K562 (cell line): ENCODE measurements at regions of chr16 and their contacts with region 1.

Region 1: DNA sequence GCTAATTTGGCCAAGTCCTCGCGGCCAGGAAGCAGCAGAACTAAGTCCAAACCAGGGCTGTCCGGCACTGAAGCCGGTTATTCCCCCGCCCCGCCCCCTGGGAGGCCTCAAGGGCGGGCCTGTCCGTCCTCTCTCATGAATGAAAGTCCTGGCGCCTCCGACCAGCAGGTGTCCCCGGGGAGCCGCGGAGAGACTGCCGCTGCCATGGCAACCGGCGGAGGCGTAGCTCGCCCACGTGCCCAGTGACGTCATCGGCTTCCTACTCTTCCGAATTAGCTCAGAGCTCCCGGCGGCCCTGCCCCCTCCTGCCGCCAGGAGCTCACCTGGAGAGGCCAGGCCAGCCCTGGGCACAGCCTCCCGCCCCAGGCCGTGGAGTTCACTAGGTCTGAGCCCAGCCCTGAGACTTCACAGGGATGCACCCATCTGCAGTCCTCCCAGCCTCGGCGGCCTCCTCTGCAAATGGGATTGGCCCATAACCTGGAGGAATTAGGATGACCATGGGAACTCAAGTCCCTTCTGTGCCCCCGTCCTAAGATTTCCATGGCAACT is 1.3 kb downstream of the SPATA2L start:
- DNase-seq: peak; percentile 90 to 99 (median 93)
- ATAC-seq: peak; percentile 73
- H3K4me3 ChIP-seq: peak overlapping the region; percentile 51
- H3K27ac ChIP-seq: peak overlapping the region; percentile 76
- H3K4me1 ChIP-seq: peaks cover 13 to 69% of the 10 kb centered on the region in 2 experiments
- H3K27me3 ChIP-seq: no peaks in the 10 kb centered on the region
- CTCF ChIP-seq: peak; percentile 86 to 96 (median 88)
- EP300 ChIP-seq: peak; percentile 43; the same call in 1 of the 2 replicates
- POLR2A ChIP-seq: no peak; the same call in 1 of the 2 replicates
- RAD21 ChIP-seq: peak; percentile 74 to 81

Region 2: DNA sequence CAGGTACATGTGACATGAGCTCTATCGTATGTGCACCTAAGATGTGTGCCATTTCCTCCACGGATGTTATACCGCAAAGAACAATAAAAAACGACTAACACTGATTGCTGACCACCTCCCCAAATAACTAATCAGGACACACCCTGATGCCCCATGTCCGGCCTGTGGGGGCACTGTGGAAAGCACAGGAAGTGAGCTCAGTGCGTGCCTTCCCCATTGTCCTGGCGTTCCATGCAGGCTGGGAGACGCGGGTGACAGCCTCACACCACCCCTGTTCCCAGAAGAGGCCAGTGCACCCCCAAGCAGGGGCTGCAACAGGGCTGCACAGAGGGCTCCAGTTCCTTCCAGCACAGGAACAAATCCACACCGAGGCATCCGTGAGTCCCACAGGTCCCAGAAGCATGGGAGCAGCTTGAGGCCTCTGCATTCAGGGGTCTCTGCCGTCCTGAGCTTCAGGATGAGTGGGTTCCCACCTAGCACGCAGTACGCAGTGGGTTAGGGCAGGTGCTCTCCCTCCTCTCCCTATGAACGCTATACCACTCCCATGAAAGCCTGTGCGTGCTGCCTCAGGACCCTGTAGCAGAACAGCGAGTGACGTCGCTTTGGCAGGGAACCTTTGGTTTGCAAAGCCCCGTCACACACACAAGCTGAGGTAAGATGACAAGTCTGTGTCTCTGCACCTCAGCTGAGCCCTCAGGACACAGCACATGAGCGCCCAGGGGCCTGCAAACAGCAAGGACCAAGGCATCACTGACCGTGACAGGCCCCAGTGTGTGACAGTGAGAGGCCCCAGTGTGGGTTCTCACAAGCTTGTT is 365.0 kb before region 1 on chr16:
- CTCF ChIA-PET with region 1: no interaction called
- POLR2A ChIA-PET with region 1: no interaction called
- in situ Hi-C with region 1: no loop called
- intact Hi-C with region 1: no loop called
- DNase-seq: no peak
- ATAC-seq: peak; percentile 19
- H3K4me3 ChIP-seq: no peak overlapping the region
- H3K27ac ChIP-seq: no peak overlapping the region; the same call in 2 of the 3 replicates
- H3K4me1 ChIP-seq: peaks cover 27 to 49% of the 10 kb centered on the region in 2 experiments
- H3K27me3 ChIP-seq: no peaks in the 10 kb centered on the region
- CTCF ChIP-seq: peak in 1 of 3 experiments; percentile 12; a peak in 1 of 6 replicates
- EP300 ChIP-seq: no peak
- POLR2A ChIP-seq: no peak
- RAD21 ChIP-seq: no peak

Region 3: GRCh38 chr16:89686520-89687091 is 13.6 kb before region 1 on chr16 and contains the start of gene CDK10:
- CTCF ChIA-PET with region 1: no interaction called
- POLR2A ChIA-PET with region 1: interaction called, 16 read pairs
- in situ Hi-C with region 1: no loop called
- intact Hi-C with region 1: no loop called
- DNase-seq: peak; percentile 95 to 99 (median 98)
- ATAC-seq: peak; percentile 96
- H3K4me3 ChIP-seq: peak within 1 kb of the TSS; percentile 93
- H3K27ac ChIP-seq: peak within 1 kb of the TSS; percentile 97
- H3K4me1 ChIP-seq: peaks cover 6 to 30% of the 10 kb centered on the region in 2 experiments
- H3K27me3 ChIP-seq: no peaks in the 10 kb centered on the region
- CTCF ChIP-seq: no peak
- EP300 ChIP-seq: no peak
- POLR2A ChIP-seq: peak; percentile 96
- RAD21 ChIP-seq: no peak
- polyA plus RNA-seq, gene CDK10: 2.0 to 3.3 TPM

Region 4: GRCh38 chr16:89711601-89712273 is 11.6 kb after region 1 on chr16:
- CTCF ChIA-PET with region 1: no interaction called
- POLR2A ChIA-PET with region 1: interaction called, 45 read pairs
- in situ Hi-C with region 1: no loop called
- intact Hi-C with region 1: no loop called
- DNase-seq: peak; percentile 88 to 99 (median 98)
- ATAC-seq: peak; percentile 86
- H3K4me3 ChIP-seq: peak overlapping the region; percentile 99
- H3K27ac ChIP-seq: peak overlapping the region; percentile 74
- H3K4me1 ChIP-seq: peaks cover 15 to 81% of the 10 kb centered on the region in 2 experiments; a peak in 4 of 5 replicates
- H3K27me3 ChIP-seq: no peaks in the 10 kb centered on the region
- CTCF ChIP-seq: no peak
- EP300 ChIP-seq: no peak
- POLR2A ChIP-seq: peak; percentile 94
- RAD21 ChIP-seq: no peak

Region 5: GRCh38 chr16:89720813-89721545 is 20.8 kb after region 1 on chr16 and contains the starts of genes VPS9D1 and ZNF276:
- CTCF ChIA-PET with region 1: no interaction called
- POLR2A ChIA-PET with region 1: interaction called, 45 read pairs
- in situ Hi-C with region 1: no loop called
- intact Hi-C with region 1: loop called (anchors 2 kb)
- DNase-seq: peak; percentile 81 to 90 (median 84)
- ATAC-seq: peak; percentile 67
- H3K4me3 ChIP-seq: peak within 1 kb of the TSS; percentile 98
- H3K27ac ChIP-seq: peak within 1 kb of the TSS; percentile 88
- H3K4me1 ChIP-seq: peaks cover 40 to 76% of the 10 kb centered on the region in 2 experiments
- H3K27me3 ChIP-seq: no peaks in the 10 kb centered on the region
- CTCF ChIP-seq: no peak
- EP300 ChIP-seq: no peak
- POLR2A ChIP-seq: peak; percentile 52
- RAD21 ChIP-seq: no peak
- polyA plus RNA-seq, gene VPS9D1: 1.0 to 1.4 TPM
- polyA plus RNA-seq, gene ZNF276: 0.49 to 0.80 TPM

Region 6: DNA sequence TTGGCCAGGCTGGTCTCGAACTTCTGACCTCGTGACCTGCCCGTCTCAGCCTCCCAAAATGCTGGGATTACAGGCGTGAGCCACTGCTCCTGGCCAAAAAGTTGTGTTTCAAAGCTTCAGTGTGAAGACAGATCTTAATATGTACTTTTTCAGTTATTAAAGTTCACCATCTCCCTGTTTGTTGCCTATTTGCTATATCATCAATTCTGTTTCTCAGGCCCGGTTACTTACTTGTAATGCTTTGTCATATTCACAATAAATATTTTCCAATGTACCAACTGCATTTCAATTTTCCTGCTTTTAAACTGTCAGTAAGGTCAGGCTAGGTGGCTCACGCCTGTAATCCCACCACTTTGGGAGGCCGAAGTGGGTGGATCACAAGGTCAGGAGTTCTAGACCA is 93.8 kb after region 1 on chr16:
- CTCF ChIA-PET with region 1: interaction called, 9 read pairs
- POLR2A ChIA-PET with region 1: no interaction called
- in situ Hi-C with region 1: no loop called
- intact Hi-C with region 1: loop called (anchors 2 kb)
- DNase-seq: no peak
- ATAC-seq: no peak
- H3K4me3 ChIP-seq: no peak overlapping the region
- H3K27ac ChIP-seq: no peak overlapping the region
- H3K4me1 ChIP-seq: no peaks in the 10 kb centered on the region
- H3K27me3 ChIP-seq: no peaks in the 10 kb centered on the region
- CTCF ChIP-seq: no peak
- EP300 ChIP-seq: no peak
- POLR2A ChIP-seq: no peak
- RAD21 ChIP-seq: no peak

Region 7: DNA sequence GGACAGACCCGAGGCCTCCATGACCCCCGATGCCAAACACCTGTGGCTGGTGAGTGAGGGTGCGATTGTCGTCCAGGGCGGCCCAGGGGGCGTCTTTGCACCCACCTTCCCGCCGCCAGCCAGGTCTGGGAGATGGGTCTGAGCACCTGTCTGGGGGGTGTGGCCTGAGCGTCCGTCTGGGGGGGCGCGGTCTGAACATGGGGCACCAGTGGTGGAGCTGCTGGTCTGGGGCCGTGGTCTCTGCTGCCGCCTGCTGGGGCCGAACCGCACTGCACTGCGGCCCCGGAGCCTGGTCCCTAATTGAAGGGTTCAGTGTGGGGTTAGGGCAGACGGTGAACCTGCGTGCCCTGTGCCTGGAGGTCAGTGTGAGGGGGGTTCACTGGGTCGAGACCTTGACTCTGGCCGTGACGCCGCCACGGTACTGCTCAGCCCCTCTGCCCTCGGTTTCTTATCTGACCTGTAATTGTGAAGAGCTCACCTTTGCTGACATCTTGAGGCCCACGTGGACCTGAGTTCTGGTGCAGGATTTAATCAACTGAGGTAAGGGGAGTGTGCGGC is 160.7 kb after region 1 on chr16:
- CTCF ChIA-PET with region 1: interaction called, 18 read pairs
- POLR2A ChIA-PET with region 1: interaction called, 3 read pairs
- in situ Hi-C with region 1: loop called (anchors 5 kb)
- intact Hi-C with region 1: no loop called
- DNase-seq: peak; percentile 82 to 97 (median 94)
- ATAC-seq: peak; percentile 98
- H3K4me3 ChIP-seq: no peak overlapping the region
- H3K27ac ChIP-seq: no peak overlapping the region
- H3K4me1 ChIP-seq: peaks cover 3 to 34% of the 10 kb centered on the region in 2 experiments
- H3K27me3 ChIP-seq: no peaks in the 10 kb centered on the region
- CTCF ChIP-seq: peak; percentile 96 to 98 (median 97)
- EP300 ChIP-seq: no peak
- POLR2A ChIP-seq: no peak
- RAD21 ChIP-seq: peak; percentile 93 to 97

Region 8: DNA sequence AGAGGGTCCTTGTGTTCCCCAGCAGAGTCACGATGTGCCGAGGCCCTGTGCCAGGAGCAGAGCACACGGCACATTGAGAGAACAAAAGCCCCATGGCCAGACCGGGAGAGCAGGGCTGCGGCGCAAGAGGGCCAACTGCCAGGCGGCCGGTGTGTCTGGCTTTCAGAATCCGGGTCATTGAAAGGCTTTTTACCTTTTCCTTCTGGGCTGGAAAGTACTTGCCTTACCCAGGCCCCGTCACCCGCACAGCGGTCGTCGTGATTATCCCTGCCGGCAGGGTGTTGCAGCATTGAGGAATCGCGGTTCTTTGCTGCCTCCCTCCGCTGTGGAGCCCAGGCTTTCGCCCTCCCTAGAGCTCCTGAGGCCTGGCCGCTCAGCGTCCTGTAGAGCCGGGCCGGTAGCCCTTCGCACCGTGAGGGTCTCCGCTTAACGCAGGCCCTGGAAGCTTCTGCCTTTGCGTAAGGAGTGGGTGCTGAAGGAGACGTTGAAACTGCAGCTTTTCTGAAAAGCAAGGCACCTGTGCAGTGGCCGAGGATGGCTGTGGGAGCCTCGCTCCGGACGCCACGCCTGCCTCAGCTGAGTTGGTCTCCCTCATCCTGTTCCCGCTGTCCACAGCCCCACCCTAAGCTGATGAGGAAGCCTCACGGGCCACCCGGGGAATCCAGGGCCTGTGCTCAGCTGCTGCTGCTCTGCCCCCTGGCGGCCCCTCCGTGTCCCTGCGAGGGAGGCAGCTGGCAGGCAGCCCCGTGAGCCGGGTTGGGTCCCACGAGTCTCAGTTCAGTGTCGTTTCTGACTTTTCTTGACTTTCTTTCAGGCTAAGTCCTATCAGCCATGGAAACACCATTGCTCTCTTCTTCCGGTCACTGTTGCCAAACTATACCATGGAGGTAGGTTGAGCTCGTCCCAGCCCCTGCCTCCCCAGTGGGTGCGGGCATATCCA is 209.9 kb after region 1 on chr16:
- CTCF ChIA-PET with region 1: no interaction called
- POLR2A ChIA-PET with region 1: interaction called, 3 read pairs
- in situ Hi-C with region 1: no loop called
- intact Hi-C with region 1: loop called (anchors 5 kb)
- DNase-seq: peak; percentile 71 to 82 (median 80)
- ATAC-seq: peak; percentile 98
- H3K4me3 ChIP-seq: no peak overlapping the region
- H3K27ac ChIP-seq: no peak overlapping the region
- H3K4me1 ChIP-seq: peaks cover 0 to 37% of the 10 kb centered on the region in 2 experiments; a peak in 2 of 5 replicates
- H3K27me3 ChIP-seq: no peaks in the 10 kb centered on the region
- CTCF ChIP-seq: peak; percentile 80 to 96 (median 84)
- EP300 ChIP-seq: no peak
- POLR2A ChIP-seq: no peak
- RAD21 ChIP-seq: peak in 1 of 2 experiments; percentile 64; a peak in 3 of 4 replicates

Region 9: DNA sequence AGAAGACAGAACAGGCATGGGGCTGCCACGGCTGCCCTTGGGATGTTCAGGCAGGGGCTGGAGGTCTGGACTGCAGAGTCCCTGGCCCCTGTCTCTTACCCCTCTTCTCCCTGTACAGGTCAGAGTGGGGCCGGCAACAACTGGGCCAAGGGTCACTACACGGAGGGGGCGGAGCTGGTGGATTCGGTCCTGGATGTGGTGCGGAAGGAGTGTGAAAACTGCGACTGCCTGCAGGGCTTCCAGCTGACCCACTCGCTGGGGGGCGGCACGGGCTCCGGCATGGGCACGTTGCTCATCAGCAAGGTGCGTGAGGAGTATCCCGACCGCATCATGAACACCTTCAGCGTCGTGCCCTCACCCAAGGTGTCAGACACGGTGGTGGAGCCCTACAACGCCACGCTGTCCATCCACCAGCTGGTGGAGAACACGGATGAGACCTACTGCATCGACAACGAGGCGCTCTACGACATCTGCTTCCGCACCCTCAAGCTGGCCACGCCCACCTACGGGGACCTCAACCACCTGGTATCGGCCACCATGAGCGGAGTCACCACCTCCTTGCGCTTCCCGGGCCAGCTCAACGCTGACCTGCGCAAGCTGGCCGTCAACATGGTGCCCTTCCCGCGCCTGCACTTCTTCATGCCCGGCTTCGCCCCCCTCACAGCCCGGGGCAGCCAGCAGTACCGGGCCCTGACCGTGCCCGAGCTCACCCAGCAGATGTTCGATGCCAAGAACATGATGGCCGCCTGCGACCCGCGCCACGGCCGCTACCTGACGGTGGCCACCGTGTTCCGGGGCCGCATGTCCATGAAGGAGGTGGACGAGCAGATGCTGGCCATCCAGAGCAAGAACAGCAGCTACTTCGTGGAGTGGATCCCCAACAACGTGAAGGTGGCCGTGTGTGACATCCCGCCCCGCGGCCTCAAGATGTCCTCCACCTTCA is 234.7 kb after region 1 on chr16:
- CTCF ChIA-PET with region 1: no interaction called
- POLR2A ChIA-PET with region 1: no interaction called
- in situ Hi-C with region 1: no loop called
- intact Hi-C with region 1: no loop called
- DNase-seq: no peak
- ATAC-seq: no peak
- H3K4me3 ChIP-seq: no peak overlapping the region
- H3K27ac ChIP-seq: no peak overlapping the region
- H3K4me1 ChIP-seq: peaks cover 0 to 20% of the 10 kb centered on the region in 2 experiments; a peak in 2 of 5 replicates
- H3K27me3 ChIP-seq: peaks cover 0 to 21% of the 10 kb centered on the region in 2 experiments; a peak in 2 of 5 replicates
- CTCF ChIP-seq: no peak
- EP300 ChIP-seq: no peak
- POLR2A ChIP-seq: no peak
- RAD21 ChIP-seq: no peak